CD8-positive, alpha-beta T cell (primary cell): ENCODE measurements at regions of chr20 and their contacts with region 1.

Region 1: DNA sequence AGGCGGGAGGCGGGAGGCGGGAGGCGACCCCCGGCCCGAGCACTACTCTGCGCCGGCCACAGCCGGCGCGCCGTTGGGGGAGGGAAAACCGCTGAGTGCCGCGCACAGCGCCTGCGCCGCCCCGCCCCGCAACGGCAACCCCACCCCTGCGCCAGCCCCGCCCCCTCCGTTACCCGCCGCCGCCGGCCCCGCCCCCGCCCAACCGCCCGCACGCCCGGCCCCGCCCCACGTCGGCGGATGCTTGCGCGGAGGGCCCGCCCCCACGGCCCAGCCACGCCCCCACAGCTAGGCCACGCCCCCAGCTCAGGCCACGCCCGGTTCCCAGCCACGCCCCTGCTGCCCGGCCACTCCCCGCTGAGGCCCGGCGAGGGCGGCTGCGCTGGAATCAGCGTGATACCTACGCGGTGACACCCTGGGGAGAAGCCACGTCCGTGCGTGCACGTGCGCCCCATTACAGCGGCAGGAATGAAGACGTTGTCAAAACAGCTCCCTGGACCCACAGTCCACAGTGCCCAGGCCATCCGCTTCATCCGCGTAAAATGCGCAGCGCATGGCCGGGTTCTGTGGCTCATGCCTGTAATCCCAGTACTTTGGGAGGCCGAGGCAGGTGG is at the start of gene TCFL5:
- DNase-seq: peak; percentile 88 to 99 (median 93)
- ATAC-seq: peak; percentile 90
- H3K4me3 ChIP-seq: peak within 1 kb of the TSS; percentile 20 to 26
- H3K4me3 Mint-ChIP-seq: peak within 1 kb of the TSS; percentile 77
- H3K27ac ChIP-seq: peak within 1 kb of the TSS in 1 of 2 experiments; percentile 56
- H3K27ac Mint-ChIP-seq: peak within 1 kb of the TSS; percentile 88
- H3K4me1 ChIP-seq: peaks cover 15% of the 10 kb centered on the region
- H3K4me1 Mint-ChIP-seq: peaks cover 20% of the 10 kb centered on the region
- H3K27me3 ChIP-seq: no peaks in the 10 kb centered on the region
- H3K27me3 Mint-ChIP-seq: no peaks in the 10 kb centered on the region
- CTCF ChIP-seq: no peak
- total RNA-seq, gene TCFL5: 4.3 to 4.8 TPM

Region 2: GRCh38 chr20:62219992-62220665 is 641.7 kb before region 1 on chr20 and contains the start of gene HRH3:
- CTCF ChIA-PET with region 1: no interaction called
- POLR2A ChIA-PET with region 1: no interaction called
- intact Hi-C with region 1: no loop called
- DNase-seq: peak in 8 of 9 experiments; percentile 8 to 61 (median 40)
- ATAC-seq: peak; percentile 91
- H3K4me3 ChIP-seq: no peak within 1 kb of the TSS
- H3K4me3 Mint-ChIP-seq: peak within 1 kb of the TSS; percentile 50
- H3K27ac ChIP-seq: no peak within 1 kb of the TSS
- H3K27ac Mint-ChIP-seq: no peak within 1 kb of the TSS
- H3K4me1 ChIP-seq: peaks cover 8% of the 10 kb centered on the region
- H3K4me1 Mint-ChIP-seq: peaks cover 2% of the 10 kb centered on the region
- H3K27me3 ChIP-seq: peaks cover 6 to 24% of the 10 kb centered on the region in 2 experiments
- H3K27me3 Mint-ChIP-seq: peaks cover 41% of the 10 kb centered on the region
- CTCF ChIP-seq: no peak
- total RNA-seq, gene HRH3: not detected

Region 3: GRCh38 chr20:62652051-62652926 is 209.5 kb before region 1 on chr20:
- CTCF ChIA-PET with region 1: no interaction called
- POLR2A ChIA-PET with region 1: no interaction called
- intact Hi-C with region 1: loop called (anchors 2 to 5 kb)
- DNase-seq: peak; percentile 44 to 88 (median 75)
- ATAC-seq: peak; percentile 59
- H3K4me3 ChIP-seq: peak overlapping the region; percentile 29 to 35
- H3K4me3 Mint-ChIP-seq: peak overlapping the region; percentile 80
- H3K27ac ChIP-seq: peak overlapping the region; percentile 82 to 83
- H3K27ac Mint-ChIP-seq: peak overlapping the region; percentile 97
- H3K4me1 ChIP-seq: peaks cover 24% of the 10 kb centered on the region
- H3K4me1 Mint-ChIP-seq: peaks cover 31% of the 10 kb centered on the region
- H3K27me3 ChIP-seq: no peaks in the 10 kb centered on the region
- H3K27me3 Mint-ChIP-seq: no peaks in the 10 kb centered on the region
- CTCF ChIP-seq: no peak

Region 4: GRCh38 chr20:62926239-62927104 is 64.6 kb after region 1 on chr20 and contains the start of gene DIDO1:
- CTCF ChIA-PET with region 1: no interaction called
- POLR2A ChIA-PET with region 1: interaction called, 3 read pairs
- intact Hi-C with region 1: loop called (anchors 5 kb)
- DNase-seq: peak; percentile 76 to 95 (median 91)
- ATAC-seq: peak; percentile 76
- H3K4me3 ChIP-seq: peak within 1 kb of the TSS; percentile 70 to 99
- H3K4me3 Mint-ChIP-seq: peak within 1 kb of the TSS; percentile 95
- H3K27ac ChIP-seq: peak within 1 kb of the TSS; percentile 75 to 96
- H3K27ac Mint-ChIP-seq: peak within 1 kb of the TSS; percentile 95
- H3K4me1 ChIP-seq: peaks cover 68% of the 10 kb centered on the region
- H3K4me1 Mint-ChIP-seq: peaks cover 75% of the 10 kb centered on the region
- H3K27me3 ChIP-seq: no peaks in the 10 kb centered on the region
- H3K27me3 Mint-ChIP-seq: no peaks in the 10 kb centered on the region
- CTCF ChIP-seq: peak; percentile 53
- total RNA-seq, gene DIDO1: 44.7 to 46.6 TPM

Region 5: DNA sequence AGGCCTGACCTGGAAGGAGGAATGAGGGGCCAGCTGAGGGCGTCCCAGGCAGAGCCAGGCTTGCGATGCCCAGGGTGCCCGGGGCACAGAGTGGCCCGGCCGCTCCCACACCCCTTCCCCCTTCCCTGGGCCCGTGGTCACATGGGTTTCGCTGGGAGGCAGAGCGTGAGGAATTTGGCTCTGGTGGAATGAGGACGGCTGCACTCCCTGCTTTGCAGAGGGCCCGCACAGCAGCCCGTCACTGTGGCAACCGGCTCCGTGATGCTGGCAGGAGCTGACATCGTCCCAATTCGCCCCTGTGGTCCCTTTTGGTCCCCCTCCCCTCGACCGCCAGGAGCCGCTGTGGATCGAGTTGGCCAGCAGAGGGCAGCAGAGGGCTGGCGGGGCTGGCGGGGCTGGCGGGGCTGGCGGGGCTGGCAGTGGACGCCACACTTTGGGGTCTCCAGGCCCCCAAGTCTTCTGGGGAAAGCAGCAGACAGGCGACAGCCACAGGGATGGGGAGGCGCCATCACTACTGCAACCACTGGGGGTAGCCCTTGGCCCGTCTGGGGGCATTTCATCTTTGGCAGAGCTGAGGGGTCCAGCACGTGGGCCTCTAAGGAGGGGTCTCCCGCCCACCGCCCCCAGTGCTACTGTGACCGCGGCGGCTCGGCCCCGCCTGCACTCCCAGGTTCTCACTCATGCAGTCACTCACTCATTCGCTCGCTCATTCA is 194.6 kb after region 1 on chr20:
- CTCF ChIA-PET with region 1: no interaction called
- POLR2A ChIA-PET with region 1: no interaction called
- intact Hi-C with region 1: no loop called
- DNase-seq: peak in 8 of 9 experiments; percentile 12 to 60 (median 40)
- ATAC-seq: peak; percentile 71
- H3K4me3 ChIP-seq: no peak overlapping the region
- H3K4me3 Mint-ChIP-seq: no peak overlapping the region
- H3K27ac ChIP-seq: no peak overlapping the region
- H3K27ac Mint-ChIP-seq: no peak overlapping the region
- H3K4me1 ChIP-seq: no peaks in the 10 kb centered on the region
- H3K4me1 Mint-ChIP-seq: no peaks in the 10 kb centered on the region
- H3K27me3 ChIP-seq: peaks cover 2 to 3% of the 10 kb centered on the region in 2 experiments
- H3K27me3 Mint-ChIP-seq: peaks cover 11% of the 10 kb centered on the region
- CTCF ChIP-seq: peak; percentile 75

Region 6: DNA sequence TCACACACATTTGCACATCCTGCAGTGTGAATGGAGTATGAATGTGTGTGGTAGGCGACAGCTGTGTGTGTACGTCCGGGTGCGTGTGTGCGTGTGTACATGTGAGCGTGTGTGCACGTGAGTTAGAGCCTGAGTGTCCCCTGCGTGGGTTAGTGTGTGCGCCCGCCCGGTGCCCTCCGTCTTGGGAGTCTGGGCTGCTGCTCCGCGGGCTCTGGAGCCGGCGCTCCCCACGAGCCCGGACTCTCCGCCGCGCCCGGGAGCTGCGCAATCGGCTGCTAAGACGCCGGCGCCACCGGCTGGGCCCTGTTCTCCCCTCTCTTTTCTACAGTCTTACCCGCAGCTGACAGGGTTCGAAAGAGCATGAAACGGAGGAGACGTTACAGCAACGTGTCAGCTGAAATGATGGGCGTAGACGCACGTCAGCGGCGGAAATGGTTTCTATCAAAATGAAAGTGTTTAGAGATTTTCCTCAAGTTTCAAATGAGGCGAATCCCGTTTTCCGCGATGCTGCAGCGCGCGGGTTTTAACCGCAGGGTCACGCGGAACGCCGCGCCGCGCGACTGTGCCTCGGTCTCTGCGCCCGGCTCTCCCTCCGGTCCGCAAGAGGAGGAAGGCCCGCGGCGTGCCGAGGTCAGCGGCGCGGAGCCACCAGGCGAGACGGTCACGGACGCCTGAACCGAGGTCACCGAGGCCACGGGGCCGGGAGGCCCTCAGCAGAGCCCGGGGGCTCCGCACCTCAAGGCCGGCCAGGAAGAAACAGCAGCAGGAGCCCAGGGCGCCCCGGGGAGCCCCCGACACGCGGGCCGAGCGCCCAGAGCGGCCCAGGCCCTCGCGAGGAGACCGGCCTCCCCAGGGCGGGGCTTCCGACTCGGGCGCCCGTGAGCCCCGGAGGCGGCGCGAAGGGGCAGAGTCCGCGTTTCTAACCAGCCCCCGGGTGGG is 240.2 kb after region 1 on chr20:
- CTCF ChIA-PET with region 1: no interaction called
- POLR2A ChIA-PET with region 1: interaction called, 5 read pairs
- intact Hi-C with region 1: loop called in 1 of 2 experiments (anchors 2 kb)
- DNase-seq: peak; percentile 30 to 84 (median 59)
- ATAC-seq: peak; percentile 68
- H3K4me3 ChIP-seq: peak overlapping the region; percentile 74 to 98
- H3K4me3 Mint-ChIP-seq: peak overlapping the region; percentile 87
- H3K27ac ChIP-seq: peak overlapping the region; percentile 89 to 98
- H3K27ac Mint-ChIP-seq: peak overlapping the region; percentile 91
- H3K4me1 ChIP-seq: no peaks in the 10 kb centered on the region
- H3K4me1 Mint-ChIP-seq: peaks cover 11% of the 10 kb centered on the region
- H3K27me3 ChIP-seq: no peaks in the 10 kb centered on the region
- H3K27me3 Mint-ChIP-seq: no peaks in the 10 kb centered on the region
- CTCF ChIP-seq: no peak

Region 7: GRCh38 chr20:63216041-63216848 is 354.4 kb after region 1 on chr20 and contains the start of gene YTHDF1:
- CTCF ChIA-PET with region 1: no interaction called
- POLR2A ChIA-PET with region 1: no interaction called
- intact Hi-C with region 1: loop called in 1 of 2 experiments (anchors 5 kb)
- DNase-seq: peak; percentile 86 to 98 (median 95)
- ATAC-seq: peak; percentile 96
- H3K4me3 ChIP-seq: peak within 1 kb of the TSS; percentile 68 to 84
- H3K4me3 Mint-ChIP-seq: peak within 1 kb of the TSS; percentile 91
- H3K27ac ChIP-seq: peak within 1 kb of the TSS; percentile 73 to 74
- H3K27ac Mint-ChIP-seq: peak within 1 kb of the TSS; percentile 94
- H3K4me1 ChIP-seq: peaks cover 44% of the 10 kb centered on the region
- H3K4me1 Mint-ChIP-seq: peaks cover 44% of the 10 kb centered on the region
- H3K27me3 ChIP-seq: no peaks in the 10 kb centered on the region
- H3K27me3 Mint-ChIP-seq: peaks cover 2% of the 10 kb centered on the region
- CTCF ChIP-seq: no peak
- total RNA-seq, gene YTHDF1: 44.8 to 45.7 TPM